H1 (cell line): ENCODE measurements at regions of chr3 and their contacts with region 1.

Region 1: DNA sequence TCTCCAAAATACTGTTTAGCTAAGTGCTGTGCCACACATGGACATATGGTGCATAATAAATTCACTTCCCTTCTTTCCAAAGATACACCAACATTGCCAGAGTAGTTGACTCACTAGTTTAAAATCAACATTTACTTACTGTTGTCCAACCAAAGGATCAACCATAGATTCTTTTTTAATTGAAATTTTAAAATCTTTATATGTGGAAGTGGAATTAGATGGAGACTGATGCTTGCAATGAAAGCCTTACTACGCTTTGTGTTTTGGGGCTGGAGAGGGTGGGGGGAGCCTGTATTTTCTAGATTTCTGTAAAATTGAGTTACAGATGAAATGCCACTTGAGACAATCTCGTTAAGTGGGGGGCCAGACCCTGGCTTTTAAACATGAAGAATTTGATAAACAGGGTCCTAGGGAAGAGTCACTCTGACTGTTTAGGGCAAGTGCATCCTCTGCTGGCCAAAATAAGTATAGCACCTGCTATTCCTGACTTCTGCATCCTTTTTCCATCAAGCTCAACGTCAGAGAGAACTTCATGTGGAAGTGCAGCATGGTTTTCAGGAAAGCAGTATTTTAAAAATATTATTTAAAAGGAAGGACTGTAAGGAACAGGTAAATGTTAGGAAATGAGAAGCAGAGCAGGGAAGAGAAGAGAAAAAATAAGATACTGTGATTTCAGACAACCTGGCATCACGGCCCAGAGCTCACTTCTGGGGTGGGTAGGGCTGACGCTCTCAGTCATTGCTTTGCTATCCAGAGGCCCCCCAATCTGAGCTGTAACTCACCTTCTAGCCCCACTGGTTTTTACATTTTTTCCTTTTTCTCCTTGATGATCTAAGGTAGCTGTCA is 76.7 kb downstream of the BOC start:
- DNase-seq: peak in 1 of 2 experiments; percentile 83
- H3K4me3 ChIP-seq: no peak overlapping the region
- H3K27ac ChIP-seq: no peak overlapping the region
- H3K4me1 ChIP-seq: 0 out of 7 replicates have a peak, but pooled peaks cover 0 to 2% (median 0%) of the 10 kb centered on the region in 4 experiments
- H3K27me3 ChIP-seq: no peaks in the 10 kb centered on the region
- CTCF ChIP-seq: peak in 2 of 3 experiments; percentile 92 to 95; a peak in 3 of 4 replicates
- EP300 ChIP-seq: no peak
- POLR2A ChIP-seq: no peak
- RAD21 ChIP-seq: peak; percentile 98 to 99

Region 2: GRCh38 chr3:113079218-113079961 is 208.6 kb before region 1 on chr3:
- CTCF ChIA-PET with region 1: interaction called, 16 read pairs
- POLR2A ChIA-PET with region 1: no interaction called
- DNase-seq: no peak
- H3K4me3 ChIP-seq: no peak overlapping the region
- H3K27ac ChIP-seq: no peak overlapping the region
- H3K4me1 ChIP-seq: peaks cover 0 to 4% (median 0%) of the 10 kb centered on the region in 4 experiments; a peak in 1 of 7 replicates
- H3K27me3 ChIP-seq: no peaks in the 10 kb centered on the region
- CTCF ChIP-seq: no peak
- EP300 ChIP-seq: no peak
- POLR2A ChIP-seq: no peak
- RAD21 ChIP-seq: no peak

Region 3: GRCh38 chr3:113111011-113111707 is 176.9 kb before region 1 on chr3:
- CTCF ChIA-PET with region 1: interaction called, 12 read pairs
- POLR2A ChIA-PET with region 1: no interaction called
- DNase-seq: no peak
- H3K4me3 ChIP-seq: no peak overlapping the region
- H3K27ac ChIP-seq: no peak overlapping the region
- H3K4me1 ChIP-seq: peaks cover 0 to 5% (median 2%) of the 10 kb centered on the region in 4 experiments; a peak in 3 of 7 replicates
- H3K27me3 ChIP-seq: no peaks in the 10 kb centered on the region
- CTCF ChIP-seq: no peak
- EP300 ChIP-seq: no peak
- POLR2A ChIP-seq: no peak
- RAD21 ChIP-seq: no peak

Region 4: GRCh38 chr3:113211330-113212149 is 76.5 kb before region 1 on chr3 and contains the start of gene BOC:
- CTCF ChIA-PET with region 1: interaction called, 13 read pairs
- POLR2A ChIA-PET with region 1: no interaction called
- DNase-seq: no peak
- H3K4me3 ChIP-seq: peak within 1 kb of the TSS; percentile 62 to 96 (median 85)
- H3K27ac ChIP-seq: peak within 1 kb of the TSS; percentile 1; the same call in 1 of the 2 replicates
- H3K4me1 ChIP-seq: peaks cover 8 to 19% (median 11%) of the 10 kb centered on the region in 4 experiments; a peak in 6 of 7 replicates
- H3K27me3 ChIP-seq: peaks cover 0 to 21% (median 15%) of the 10 kb centered on the region in 4 experiments; a peak in 6 of 7 replicates
- CTCF ChIP-seq: 0 out of 4 replicates have a peak, but pooled peaks of 1 of the 3 experiments have one; percentile 9
- EP300 ChIP-seq: no peak
- POLR2A ChIP-seq: peak in 1 of 2 experiments; percentile 58; a peak in 2 of 3 replicates
- RAD21 ChIP-seq: peak in 1 of 2 experiments; percentile 6; a peak in 1 of 4 replicates
- total RNA-seq, gene BOC: 6.0 and 6.9 TPM in 2 replicates

Region 5: DNA sequence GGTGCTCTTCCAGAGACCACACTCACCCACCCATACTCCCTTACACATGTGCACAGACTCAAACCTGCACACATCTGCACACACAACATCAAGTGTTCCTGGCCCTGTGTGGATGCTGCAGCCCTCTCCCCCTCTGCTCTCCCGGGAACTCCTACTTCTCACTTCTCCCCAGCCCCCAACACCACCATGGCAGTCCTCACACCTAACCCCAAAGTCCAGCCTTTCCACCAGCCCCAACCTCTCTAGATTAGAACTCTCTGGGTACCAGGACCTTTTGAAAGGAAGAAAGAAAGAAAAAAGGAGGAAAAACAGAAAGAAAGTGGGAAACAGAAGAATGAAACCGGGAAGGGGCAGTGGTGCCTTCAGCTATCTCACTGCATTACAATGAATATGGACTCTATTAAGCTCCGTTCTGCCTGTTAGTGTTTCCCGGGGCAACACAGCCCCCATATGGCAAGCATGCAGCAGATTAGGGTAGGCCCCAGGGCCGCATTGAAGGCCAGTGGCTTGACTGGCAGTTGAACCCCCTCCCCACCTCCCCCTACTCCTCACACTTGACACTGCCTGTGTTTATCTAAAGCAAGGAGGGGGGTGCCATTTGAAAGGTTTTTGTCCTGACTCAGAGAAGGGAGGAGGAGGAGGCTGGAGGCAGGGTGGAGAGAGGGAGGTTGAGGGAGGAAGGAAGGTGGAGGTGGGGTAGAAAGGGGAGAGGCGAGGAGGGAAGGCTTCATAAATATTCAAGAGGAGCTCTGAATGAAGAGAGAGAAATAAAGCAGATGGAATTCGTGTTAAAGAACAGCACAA is 46.5 kb before region 1 on chr3:
- CTCF ChIA-PET with region 1: interaction called, 21 read pairs
- POLR2A ChIA-PET with region 1: no interaction called
- DNase-seq: peak in 1 of 2 experiments; percentile 58
- H3K4me3 ChIP-seq: peak overlapping the region in 1 of 4 experiments; percentile 32; a peak in 1 of 8 replicates
- H3K27ac ChIP-seq: peak overlapping the region; percentile 49; the same call in 1 of the 2 replicates
- H3K4me1 ChIP-seq: peaks cover 7 to 30% (median 15%) of the 10 kb centered on the region in 4 experiments
- H3K27me3 ChIP-seq: no peaks in the 10 kb centered on the region
- CTCF ChIP-seq: no peak
- EP300 ChIP-seq: peak in 1 of 2 experiments; percentile 30; a peak in 1 of 3 replicates
- POLR2A ChIP-seq: no peak; a peak in 1 of 3 replicates
- RAD21 ChIP-seq: peak; percentile 27; a peak in 2 of 4 replicates

Region 6: GRCh38 chr3:113275929-113276750 is 11.9 kb before region 1 on chr3:
- CTCF ChIA-PET with region 1: interaction called, 56 read pairs
- POLR2A ChIA-PET with region 1: no interaction called
- DNase-seq: no peak
- H3K4me3 ChIP-seq: no peak overlapping the region; a peak in 1 of 8 replicates
- H3K27ac ChIP-seq: no peak overlapping the region
- H3K4me1 ChIP-seq: peaks cover 0 to 11% (median 5%) of the 10 kb centered on the region in 4 experiments; a peak in 5 of 7 replicates
- H3K27me3 ChIP-seq: no peaks in the 10 kb centered on the region
- CTCF ChIP-seq: peak; percentile 8 to 54 (median 39)
- EP300 ChIP-seq: no peak
- POLR2A ChIP-seq: no peak
- RAD21 ChIP-seq: peak; percentile 23 to 48; a peak in 3 of 4 replicates

Region 7: GRCh38 chr3:113546414-113546893 is 258.4 kb after region 1 on chr3:
- CTCF ChIA-PET with region 1: no interaction called
- POLR2A ChIA-PET with region 1: no interaction called
- DNase-seq: no peak
- H3K4me3 ChIP-seq: no peak overlapping the region
- H3K27ac ChIP-seq: no peak overlapping the region
- H3K4me1 ChIP-seq: no peaks in the 10 kb centered on the region
- H3K27me3 ChIP-seq: no peaks in the 10 kb centered on the region
- CTCF ChIP-seq: no peak
- EP300 ChIP-seq: no peak
- POLR2A ChIP-seq: no peak
- RAD21 ChIP-seq: no peak